Sigmoid colon (tissue), 7 donors: ENCODE measurements at regions of chr3 and their contacts with region 1.

Region 1: DNA sequence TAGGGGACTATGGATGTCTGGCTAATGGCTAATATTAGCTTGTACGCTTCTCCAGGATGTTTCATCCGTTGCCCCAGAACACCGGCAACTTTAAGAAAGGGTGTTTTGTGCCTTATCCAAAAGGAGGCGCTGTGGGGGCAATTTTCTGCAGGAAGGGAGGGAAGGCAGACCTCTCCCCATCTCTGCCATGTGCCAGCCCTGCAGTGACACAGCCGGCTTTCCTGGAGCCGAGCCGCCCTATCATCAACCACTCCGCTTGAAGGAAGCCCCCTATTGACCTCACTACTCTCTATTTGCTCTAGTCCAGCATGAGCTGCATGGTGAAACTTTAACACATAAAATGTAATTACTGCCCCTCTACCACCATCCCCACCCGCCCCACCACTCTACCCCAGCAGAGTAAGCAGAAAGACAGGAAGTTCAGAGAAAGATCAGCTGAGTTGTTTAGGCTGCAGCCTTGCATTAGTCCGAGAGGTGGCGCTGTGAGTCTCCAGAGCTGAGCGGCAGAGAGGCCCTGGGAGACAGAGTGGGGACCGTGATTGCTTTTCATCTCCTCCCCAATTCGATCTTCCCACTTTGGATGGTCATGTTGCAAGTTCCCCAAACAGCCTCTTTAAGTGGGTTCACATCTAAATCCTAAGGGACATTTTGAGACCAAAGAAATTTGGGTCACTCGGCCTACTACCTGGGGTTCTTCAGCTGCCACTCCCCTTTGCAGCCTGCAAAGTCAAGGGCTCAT is 24.5 kb upstream of the RAD18 start:
- DNase-seq: peak; percentile 79
- H3K4me3 ChIP-seq: no peak overlapping the region
- H3K27ac ChIP-seq: no peak overlapping the region
- H3K4me1 ChIP-seq: peaks cover 0 to 8% (median 0%) of the 10 kb centered on the region in 4 donors
- H3K27me3 ChIP-seq: no peaks in the 10 kb centered on the region
- CTCF ChIP-seq: peak; percentile 46 to 68 (median 62)
- EP300 ChIP-seq: no peak
- POLR2A ChIP-seq: no peak

Region 2: DNA sequence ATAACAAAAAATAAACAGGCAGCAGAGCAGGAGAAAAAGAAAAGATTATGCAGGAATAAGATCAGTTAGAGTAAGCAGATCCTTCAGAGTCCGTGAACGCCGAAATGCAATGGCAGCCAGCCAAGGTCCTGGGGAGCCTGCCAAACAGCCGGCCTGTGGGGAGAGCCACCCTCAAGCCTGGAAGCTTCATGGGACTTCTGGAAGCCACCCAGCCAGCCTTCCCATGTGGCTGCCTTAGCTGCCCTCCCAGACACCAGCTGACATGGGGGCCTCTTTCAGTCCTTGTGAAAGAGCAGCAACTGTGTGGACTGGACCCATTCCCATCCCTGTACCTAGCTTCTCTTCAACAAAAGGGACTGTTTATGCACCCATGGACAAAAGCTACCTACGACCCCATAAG is 40.3 kb after region 1 on chr3:
- intact Hi-C with region 1: no loop called
- DNase-seq: peak; percentile 95
- H3K4me3 ChIP-seq: no peak overlapping the region
- H3K27ac ChIP-seq: peak overlapping the region in 3 of 4 donors; percentile 33 to 52 (median 45)
- H3K4me1 ChIP-seq: peaks cover 0 to 16% (median 15%) of the 10 kb centered on the region in 4 donors
- H3K27me3 ChIP-seq: no peaks in the 10 kb centered on the region
- CTCF ChIP-seq: no peak
- EP300 ChIP-seq: no peak
- POLR2A ChIP-seq: no peak

Region 3: GRCh38 chr3:9067352-9067975 is 79.7 kb after region 1 on chr3:
- intact Hi-C with region 1: loop called (anchors 1 kb)
- DNase-seq: peak; percentile 67
- H3K4me3 ChIP-seq: no peak overlapping the region
- H3K27ac ChIP-seq: no peak overlapping the region
- H3K4me1 ChIP-seq: no peaks in the 10 kb centered on the region
- H3K27me3 ChIP-seq: no peaks in the 10 kb centered on the region
- CTCF ChIP-seq: peak; percentile 87 to 97 (median 91)
- EP300 ChIP-seq: no peak
- POLR2A ChIP-seq: no peak

Region 4: GRCh38 chr3:9302425-9303181 is 314.8 kb after region 1 on chr3:
- intact Hi-C with region 1: loop called (anchors 5 kb)
- DNase-seq: peak; percentile 88
- H3K4me3 ChIP-seq: peak overlapping the region in 3 of 4 donors; percentile 13 to 38 (median 31)
- H3K27ac ChIP-seq: no peak overlapping the region
- H3K4me1 ChIP-seq: peaks cover 0 to 10% (median 3%) of the 10 kb centered on the region in 4 donors
- H3K27me3 ChIP-seq: no peaks in the 10 kb centered on the region
- CTCF ChIP-seq: peak; percentile 67 to 88 (median 86)
- EP300 ChIP-seq: no peak
- POLR2A ChIP-seq: no peak

Region 5: DNA sequence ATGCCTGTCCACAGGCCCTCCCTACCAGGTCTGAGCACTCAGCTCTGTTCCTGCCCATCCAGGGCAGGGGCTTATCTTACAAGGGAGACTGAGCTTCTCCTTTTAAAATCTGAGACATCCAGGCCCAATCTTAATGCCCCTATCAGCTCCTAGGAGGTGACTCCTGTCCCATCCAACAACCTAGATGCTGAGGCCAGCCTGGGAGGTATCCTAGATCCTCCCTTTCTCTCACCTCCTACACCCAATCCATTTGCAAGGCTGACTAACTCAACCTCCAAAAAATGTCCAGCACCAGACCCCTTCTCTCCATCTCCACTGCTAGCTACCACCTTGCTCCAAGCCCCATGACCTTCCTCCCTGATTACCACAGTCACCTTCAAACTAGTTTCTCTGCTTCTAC is 548.4 kb after region 1 on chr3:
- intact Hi-C with region 1: no loop called
- DNase-seq: no peak
- H3K4me3 ChIP-seq: no peak overlapping the region
- H3K27ac ChIP-seq: no peak overlapping the region
- H3K4me1 ChIP-seq: no peaks in the 10 kb centered on the region
- H3K27me3 ChIP-seq: no peaks in the 10 kb centered on the region
- CTCF ChIP-seq: no peak
- EP300 ChIP-seq: no peak
- POLR2A ChIP-seq: no peak